MCF 10A (cell line): ENCODE measurements at regions of chr20 and their contacts with region 1.

Region 1: GRCh38 chr20:20780127-20780824 is 67.8 kb upstream of the RALGAPA2 start:
- DNase-seq: peak; percentile 98
- H3K4me3 Mint-ChIP-seq: peak overlapping the region; percentile 59
- H3K27ac Mint-ChIP-seq: peak overlapping the region; percentile 57
- H3K4me1 Mint-ChIP-seq: peaks cover 19% of the 10 kb centered on the region
- H3K27me3 Mint-ChIP-seq: no peaks in the 10 kb centered on the region
- CTCF ChIP-seq: no peak

Region 2: DNA sequence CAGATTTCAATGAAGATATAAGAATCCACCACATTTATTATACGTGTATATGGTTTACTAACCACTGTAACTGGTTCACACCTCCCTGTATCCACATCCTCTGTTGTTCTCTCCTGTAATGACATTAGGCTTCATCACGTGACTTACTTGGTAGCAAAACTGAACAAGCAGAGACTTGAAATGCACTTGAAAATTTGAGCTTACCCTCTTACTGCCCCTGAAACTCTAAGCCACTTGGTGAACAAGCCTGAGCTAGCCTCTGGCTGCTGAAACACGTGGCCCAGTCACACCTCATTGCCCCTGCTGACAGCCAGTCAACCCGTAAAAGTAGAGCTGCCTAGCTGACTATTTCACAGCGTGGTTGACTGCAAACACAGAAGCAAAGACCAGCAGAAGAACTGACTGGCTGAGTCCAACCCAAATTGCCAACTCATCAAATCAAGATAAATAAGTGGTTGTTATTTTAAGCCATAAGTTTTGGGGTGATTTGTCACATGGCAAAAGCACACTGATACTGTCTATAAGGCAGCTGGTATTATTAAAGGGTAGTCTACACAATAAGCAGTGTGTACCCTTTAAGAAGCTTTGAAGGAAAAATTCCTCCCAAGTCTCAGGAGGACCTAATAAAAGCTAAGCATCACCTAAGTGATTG is 176.8 kb before region 1 on chr20:
- CTCF ChIA-PET with region 1: no interaction called
- POLR2A ChIA-PET with region 1: interaction called, 12 read pairs
- intact Hi-C with region 1: no loop called
- DNase-seq: peak; percentile 88
- H3K4me3 Mint-ChIP-seq: no peak overlapping the region
- H3K27ac Mint-ChIP-seq: peak overlapping the region; percentile 50
- H3K4me1 Mint-ChIP-seq: peaks cover 14% of the 10 kb centered on the region
- H3K27me3 Mint-ChIP-seq: no peaks in the 10 kb centered on the region
- CTCF ChIP-seq: no peak

Region 3: GRCh38 chr20:20734475-20734948 is 45.8 kb before region 1 on chr20:
- CTCF ChIA-PET with region 1: interaction called, 3 read pairs
- POLR2A ChIA-PET with region 1: interaction called, 7 read pairs
- intact Hi-C with region 1: loop called (anchors 5 kb)
- DNase-seq: no peak
- H3K4me3 Mint-ChIP-seq: no peak overlapping the region
- H3K27ac Mint-ChIP-seq: no peak overlapping the region
- H3K4me1 Mint-ChIP-seq: peaks cover 20% of the 10 kb centered on the region
- H3K27me3 Mint-ChIP-seq: no peaks in the 10 kb centered on the region
- CTCF ChIP-seq: no peak

Region 4: GRCh38 chr20:20759132-20759531 is 21.1 kb before region 1 on chr20:
- CTCF ChIA-PET with region 1: interaction called, 9 read pairs
- POLR2A ChIA-PET with region 1: interaction called, 11 read pairs
- intact Hi-C with region 1: no loop called
- DNase-seq: no peak
- H3K4me3 Mint-ChIP-seq: no peak overlapping the region
- H3K27ac Mint-ChIP-seq: no peak overlapping the region
- H3K4me1 Mint-ChIP-seq: peaks cover 10% of the 10 kb centered on the region
- H3K27me3 Mint-ChIP-seq: no peaks in the 10 kb centered on the region
- CTCF ChIP-seq: no peak